Common myeloid progenitor, CD34-positive (primary cell): ENCODE measurements at regions of chr12 and their contacts with region 1.

Region 1: GRCh38 chr12:1594261-1595025 is at the start of gene FBXL14:
- DNase-seq: peak; percentile 92 to 96 (median 96)
- H3K4me3 ChIP-seq: peak within 1 kb of the TSS; percentile 73 to 95 (median 86)
- H3K27ac ChIP-seq: peak within 1 kb of the TSS; percentile 64 to 89
- H3K4me1 ChIP-seq: peaks cover 15 to 51% (median 41%) of the 10 kb centered on the region in 4 experiments
- H3K27me3 ChIP-seq: no peaks in the 10 kb centered on the region

Region 2: DNA sequence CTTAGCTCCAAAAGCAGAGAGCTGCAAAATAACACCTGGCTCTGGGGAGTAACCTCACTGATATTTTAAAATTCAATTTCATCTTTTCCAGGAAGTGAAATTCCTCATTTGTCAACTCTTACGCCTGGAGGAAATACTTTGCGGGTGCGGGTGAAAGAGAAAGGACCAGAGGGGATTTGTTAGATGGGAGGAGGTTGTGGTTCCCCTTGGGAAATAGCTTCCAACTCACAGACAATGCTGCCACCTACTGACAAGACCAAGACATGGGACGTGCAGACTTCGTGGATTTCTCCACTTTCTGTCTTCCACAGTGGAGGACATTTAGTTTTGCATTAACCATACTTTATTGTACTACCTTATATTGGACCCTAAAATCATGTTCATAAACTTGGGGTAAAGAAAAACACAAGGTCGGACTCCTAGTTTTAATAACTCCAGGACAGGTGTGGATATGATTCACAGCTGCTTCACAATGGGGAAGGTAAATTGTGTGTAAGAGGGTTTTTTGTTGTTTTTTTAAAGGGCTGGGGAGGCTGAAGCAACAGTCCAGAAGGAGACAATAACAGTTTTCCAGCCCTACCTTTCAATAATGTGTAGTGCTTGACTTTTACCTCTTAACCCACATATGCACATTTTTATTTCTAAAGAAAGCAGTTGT is 10.9 kb before region 1 on chr12:
- CTCF ChIA-PET with region 1: interaction called, 16 read pairs
- POLR2A ChIA-PET with region 1: interaction called, 3 read pairs
- DNase-seq: peak; percentile 87 to 93 (median 88)
- H3K4me3 ChIP-seq: peak overlapping the region in 3 of 7 experiments; percentile 17 to 61 (median 26)
- H3K27ac ChIP-seq: no peak overlapping the region
- H3K4me1 ChIP-seq: peaks cover 0 to 8% (median 2%) of the 10 kb centered on the region in 4 experiments
- H3K27me3 ChIP-seq: peaks cover 0 to 11% (median 0%) of the 10 kb centered on the region in 5 experiments

Region 3: DNA sequence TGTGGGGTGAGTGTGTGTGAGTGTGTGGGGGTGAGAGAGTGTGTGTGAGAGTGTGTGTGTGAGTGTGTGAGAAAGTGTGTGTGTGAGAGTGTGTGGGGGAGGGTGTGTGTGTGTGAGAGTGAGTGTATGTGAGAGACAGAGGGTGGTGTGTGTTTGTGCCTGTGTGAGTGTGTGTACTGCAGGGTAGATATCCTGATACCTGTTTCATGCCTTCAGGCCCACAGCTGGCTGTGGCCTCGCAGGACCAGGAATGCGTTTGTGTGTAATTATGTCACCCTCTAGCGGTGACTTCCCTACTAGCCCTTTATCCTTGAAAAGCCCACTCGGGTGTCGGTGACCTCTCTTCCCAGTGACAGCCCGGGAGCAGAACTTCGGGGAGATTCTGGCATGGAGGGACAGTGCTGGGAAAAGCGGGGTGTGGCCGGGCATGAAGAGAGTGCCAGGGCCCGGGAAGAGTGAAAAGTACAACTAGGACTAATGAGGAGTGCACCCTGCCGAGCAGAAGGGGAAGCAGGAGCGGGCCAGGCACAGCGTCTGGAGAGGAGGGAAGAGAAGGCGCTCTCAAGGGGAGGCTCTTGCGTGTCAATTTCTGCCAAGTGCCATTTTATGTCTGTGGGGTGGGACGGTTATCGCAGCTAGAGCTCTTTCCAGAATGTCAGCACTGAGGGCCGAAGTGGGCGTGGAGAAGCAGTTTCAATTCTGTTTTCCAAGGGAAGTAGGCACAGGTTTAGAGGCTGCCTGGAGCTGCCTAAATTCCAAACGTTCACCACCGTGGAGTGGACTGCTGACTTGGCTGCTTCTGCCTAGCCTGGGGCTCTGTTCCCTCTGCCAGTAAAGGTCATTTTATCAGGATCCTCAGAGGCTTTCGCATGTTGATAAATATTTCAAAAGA is 10.9 kb after region 1 on chr12:
- CTCF ChIA-PET with region 1: interaction called, 28 read pairs
- POLR2A ChIA-PET with region 1: interaction called, 4 read pairs
- DNase-seq: peak; percentile 81 to 82 (median 81)
- H3K4me3 ChIP-seq: peak overlapping the region; percentile 17 to 85 (median 70)
- H3K27ac ChIP-seq: no peak overlapping the region
- H3K4me1 ChIP-seq: peaks cover 9 to 31% (median 21%) of the 10 kb centered on the region in 4 experiments
- H3K27me3 ChIP-seq: peaks cover 0 to 3% (median 0%) of the 10 kb centered on the region in 5 experiments